CD14-positive monocyte (primary cell): ENCODE measurements at regions of chr22 and their contacts with region 1.

Region 1: GRCh38 chr22:31637938-31638618 is 23.9 kb downstream of the PISD start:
- DNase-seq: peak; percentile 84 to 89 (median 89)
- H3K4me3 ChIP-seq: peak overlapping the region; percentile 60 to 96 (median 74)
- H3K4me3 Mint-ChIP-seq: peak overlapping the region; percentile 92 to 98
- H3K27ac ChIP-seq: peak overlapping the region; percentile 97 to 98
- H3K27ac Mint-ChIP-seq: peak overlapping the region; percentile 95 to 98 (median 97)
- H3K4me1 ChIP-seq: peaks cover 76 to 92% of the 10 kb centered on the region in 2 donors
- H3K4me1 Mint-ChIP-seq: peaks cover 80% of the 10 kb centered on the region
- H3K27me3 ChIP-seq: no peaks in the 10 kb centered on the region
- H3K27me3 Mint-ChIP-seq: peaks cover 0 to 3% (median 0%) of the 10 kb centered on the region in 3 donors
- CTCF ChIP-seq: no peak

Region 2: DNA sequence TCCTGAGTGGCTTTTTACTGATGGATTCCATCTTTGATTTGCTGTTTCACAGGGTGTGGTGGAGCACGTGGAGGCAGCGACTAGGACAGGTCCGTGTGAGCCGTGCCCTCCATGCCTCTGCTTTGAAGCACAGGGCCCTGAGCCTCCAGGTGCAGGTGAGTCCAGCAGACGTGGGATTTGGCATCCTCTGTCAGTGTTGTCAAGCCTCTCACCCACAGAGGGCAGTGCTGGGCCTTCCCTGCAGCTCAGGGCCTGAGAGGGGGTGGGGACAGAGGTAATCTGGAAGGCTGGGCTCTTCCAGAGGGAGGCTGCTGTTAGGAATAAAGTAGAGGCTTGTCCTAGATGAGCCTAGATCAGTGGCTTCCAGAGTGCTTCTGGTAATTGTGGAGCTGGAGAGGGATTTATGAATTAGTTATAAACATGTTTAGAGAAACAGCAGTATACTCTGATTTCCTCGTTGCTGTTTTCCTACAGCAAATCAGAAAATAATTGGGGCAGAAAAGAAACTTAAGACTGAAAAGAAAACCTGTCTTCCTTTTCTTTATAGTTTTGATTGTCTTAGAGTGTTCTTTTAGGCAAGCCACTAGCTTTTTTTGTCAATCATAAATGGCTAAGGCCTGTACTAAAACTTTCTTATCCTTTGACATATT is 76.7 kb before region 1 on chr22:
- intact Hi-C with region 1: loop called (anchors 2 to 5 kb)
- DNase-seq: peak; percentile 6 to 31 (median 11)
- H3K4me3 ChIP-seq: no peak overlapping the region
- H3K4me3 Mint-ChIP-seq: no peak overlapping the region
- H3K27ac ChIP-seq: no peak overlapping the region
- H3K27ac Mint-ChIP-seq: peak overlapping the region in 2 of 7 donors; percentile 25 to 32
- H3K4me1 ChIP-seq: no peaks in the 10 kb centered on the region
- H3K4me1 Mint-ChIP-seq: no peaks in the 10 kb centered on the region
- H3K27me3 ChIP-seq: no peaks in the 10 kb centered on the region
- H3K27me3 Mint-ChIP-seq: peaks cover 0 to 1% (median 0%) of the 10 kb centered on the region in 3 donors
- CTCF ChIP-seq: peak; percentile 56

Region 3: GRCh38 chr22:31661851-31662656 is 24.0 kb after region 1 on chr22 and contains the start of gene PISD:
- intact Hi-C with region 1: loop called in 1 of 2 experiments (anchors 2 kb)
- DNase-seq: peak; percentile 93 to 95 (median 94)
- H3K4me3 ChIP-seq: peak within 1 kb of the TSS; percentile 57 to 100 (median 92)
- H3K4me3 Mint-ChIP-seq: peak within 1 kb of the TSS; percentile 99 to 100
- H3K27ac ChIP-seq: peak within 1 kb of the TSS; percentile 62 to 95
- H3K27ac Mint-ChIP-seq: peak within 1 kb of the TSS; percentile 94 to 97 (median 96)
- H3K4me1 ChIP-seq: peaks cover 23 to 29% of the 10 kb centered on the region in 2 donors
- H3K4me1 Mint-ChIP-seq: peaks cover 23% of the 10 kb centered on the region
- H3K27me3 ChIP-seq: no peaks in the 10 kb centered on the region
- H3K27me3 Mint-ChIP-seq: peaks cover 0 to 1% (median 0%) of the 10 kb centered on the region in 3 donors
- CTCF ChIP-seq: no peak
- polyA plus RNA-seq, gene PISD: 38.1 to 112 (median 45.3) TPM

Region 4: GRCh38 chr22:31692186-31692886 is 54.3 kb after region 1 on chr22:
- intact Hi-C with region 1: no loop called
- DNase-seq: no peak
- H3K4me3 ChIP-seq: no peak overlapping the region
- H3K4me3 Mint-ChIP-seq: no peak overlapping the region
- H3K27ac ChIP-seq: no peak overlapping the region
- H3K27ac Mint-ChIP-seq: peak overlapping the region in 3 of 7 donors; percentile 18 to 48 (median 25)
- H3K4me1 ChIP-seq: peaks cover 6 to 12% of the 10 kb centered on the region in 2 donors
- H3K4me1 Mint-ChIP-seq: peaks cover 11% of the 10 kb centered on the region
- H3K27me3 ChIP-seq: no peaks in the 10 kb centered on the region
- H3K27me3 Mint-ChIP-seq: peaks cover 0 to 2% (median 2%) of the 10 kb centered on the region in 3 donors
- CTCF ChIP-seq: no peak